Activated T-helper 1 cell treated with anti-CD3 and anti-CD28 coated beads, Interleukin-12 subunit alpha, Interleukin-12 subunit beta, Interleukin-2, Interleukin-4 antibody, amounts not matched to agents 30 ng/mL and 10 ng/mL and 1 ng/mL, durations not matched to agents 14 hours and 24 hours and 36 hours (primary cell): ENCODE measurements at regions of chr14 and their contacts with region 1.

Region 1: GRCh38 chr14:48398675-48399282 is 723.4 kb upstream of the MDGA2 start:
- DNase-seq: no peak
- H3K4me3 Mint-ChIP-seq: no peak overlapping the region
- H3K27ac Mint-ChIP-seq: no peak overlapping the region
- H3K4me1 Mint-ChIP-seq: no peaks in the 10 kb centered on the region
- H3K27me3 Mint-ChIP-seq: no peaks in the 10 kb centered on the region

Region 2: DNA sequence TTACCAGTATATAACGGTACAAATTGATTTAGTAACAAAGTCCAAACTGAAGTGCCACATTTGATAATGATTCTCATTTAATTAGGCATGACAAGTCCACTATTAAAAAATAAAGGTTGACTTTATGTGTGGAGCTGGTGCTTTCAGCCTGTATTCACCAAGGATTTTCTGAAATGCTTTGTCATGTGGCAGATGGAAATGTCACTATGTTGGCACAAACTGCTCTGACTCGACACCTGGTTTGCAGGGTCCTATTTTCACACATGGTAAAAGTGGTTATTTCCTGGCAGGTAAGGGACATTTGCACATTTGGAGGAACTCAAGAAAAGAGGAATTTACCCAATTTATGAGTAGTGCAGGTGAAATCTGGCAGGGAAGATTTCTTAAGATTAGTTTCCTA is 150.8 kb before region 1 on chr14:
- intact Hi-C with region 1: no loop called
- DNase-seq: no peak
- H3K4me3 Mint-ChIP-seq: no peak overlapping the region
- H3K27ac Mint-ChIP-seq: no peak overlapping the region
- H3K4me1 Mint-ChIP-seq: no peaks in the 10 kb centered on the region
- H3K27me3 Mint-ChIP-seq: peaks cover 2% of the 10 kb centered on the region

Region 3: DNA sequence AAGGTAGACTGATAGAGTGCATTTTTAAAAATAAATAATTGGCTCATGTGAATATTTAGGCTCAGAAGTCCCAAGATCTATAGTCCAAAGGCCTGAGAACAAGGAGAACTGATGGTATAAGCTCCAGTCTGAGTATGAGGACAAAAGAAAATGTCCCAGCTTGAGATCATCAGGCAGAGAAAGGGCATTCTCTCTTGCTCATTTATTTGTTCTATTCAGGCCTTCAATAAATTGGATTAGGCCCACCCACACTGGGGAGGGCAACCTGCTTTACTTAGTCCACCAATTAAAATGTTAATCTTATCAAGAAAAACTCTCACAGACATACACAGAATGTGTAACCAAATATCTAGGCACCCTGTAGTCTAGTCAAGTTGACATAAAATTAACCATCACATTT is 79.0 kb before region 1 on chr14:
- intact Hi-C with region 1: no loop called
- DNase-seq: no peak
- H3K4me3 Mint-ChIP-seq: no peak overlapping the region
- H3K27ac Mint-ChIP-seq: no peak overlapping the region
- H3K4me1 Mint-ChIP-seq: no peaks in the 10 kb centered on the region
- H3K27me3 Mint-ChIP-seq: no peaks in the 10 kb centered on the region

Region 4: GRCh38 chr14:49173765-49174373 is 775.1 kb after region 1 on chr14:
- intact Hi-C with region 1: loop called (anchors 5 kb)
- DNase-seq: peak; percentile 17
- H3K4me3 Mint-ChIP-seq: no peak overlapping the region
- H3K27ac Mint-ChIP-seq: no peak overlapping the region
- H3K4me1 Mint-ChIP-seq: no peaks in the 10 kb centered on the region
- H3K27me3 Mint-ChIP-seq: no peaks in the 10 kb centered on the region